H1 (cell line): ENCODE measurements at regions of chr3 and their contacts with region 1.

Region 1: DNA sequence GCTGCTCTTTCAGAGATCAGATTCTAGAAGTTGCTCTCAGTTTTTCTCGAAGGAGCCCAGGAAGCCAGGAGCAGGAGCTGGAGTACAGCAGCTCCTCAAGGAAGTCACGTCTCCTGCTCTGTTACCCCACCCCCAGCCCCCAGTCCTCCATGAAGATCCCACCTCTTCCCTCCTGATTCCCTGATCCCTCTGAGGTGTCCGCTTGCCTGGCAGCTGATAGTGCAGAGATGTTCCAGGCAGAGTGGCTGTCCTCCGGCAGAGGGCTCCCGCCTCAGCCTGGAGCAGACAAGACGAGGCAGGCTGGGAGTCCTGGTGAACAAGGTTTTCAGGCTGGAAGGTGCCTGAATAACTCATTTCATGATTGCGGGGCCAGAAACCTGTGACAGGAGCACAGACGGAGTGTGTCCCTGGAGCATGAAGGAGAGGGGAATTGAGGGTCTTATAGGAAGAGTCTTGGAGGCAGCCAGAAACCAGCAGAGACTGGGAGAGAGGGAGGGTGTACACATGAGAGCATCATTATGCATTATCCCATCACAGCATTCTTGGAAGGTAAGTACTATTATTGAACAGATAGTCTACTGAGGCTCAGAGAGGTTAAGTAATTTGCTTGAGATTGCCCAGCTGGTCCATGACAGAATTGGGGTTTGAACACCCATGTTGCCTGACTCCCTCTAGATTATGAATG is 1.2 kb downstream of the HRH1 start:
- DNase-seq: peak in 1 of 2 experiments; percentile 76
- H3K4me3 ChIP-seq: peak overlapping the region; percentile 24 to 68 (median 46); a peak in 7 of 8 replicates
- H3K27ac ChIP-seq: no peak overlapping the region
- H3K4me1 ChIP-seq: peaks cover 0 to 6% (median under 1%) of the 10 kb centered on the region in 4 experiments; a peak in 3 of 7 replicates
- H3K27me3 ChIP-seq: peaks cover 5 to 37% (median 30%) of the 10 kb centered on the region in 4 experiments
- CTCF ChIP-seq: peak; percentile 68 to 88 (median 87)
- EP300 ChIP-seq: no peak
- POLR2A ChIP-seq: no peak
- RAD21 ChIP-seq: peak; percentile 71 to 73

Region 2: GRCh38 chr3:11096266-11097135 is 59.0 kb before region 1 on chr3:
- CTCF ChIA-PET with region 1: interaction called, 11 read pairs
- POLR2A ChIA-PET with region 1: no interaction called
- DNase-seq: peak in 1 of 2 experiments; percentile 55
- H3K4me3 ChIP-seq: peak overlapping the region; percentile 7 to 48 (median 26); a peak in 5 of 8 replicates
- H3K27ac ChIP-seq: no peak overlapping the region
- H3K4me1 ChIP-seq: peaks cover 0 to 8% (median 4%) of the 10 kb centered on the region in 4 experiments; a peak in 6 of 7 replicates
- H3K27me3 ChIP-seq: peaks cover 0 to 3% (median 0%) of the 10 kb centered on the region in 4 experiments; a peak in 2 of 7 replicates
- CTCF ChIP-seq: no peak
- EP300 ChIP-seq: no peak
- POLR2A ChIP-seq: no peak
- RAD21 ChIP-seq: no peak

Region 3: GRCh38 chr3:11120091-11120805 is 35.2 kb before region 1 on chr3:
- CTCF ChIA-PET with region 1: interaction called, 13 read pairs
- POLR2A ChIA-PET with region 1: no interaction called
- DNase-seq: no peak
- H3K4me3 ChIP-seq: no peak overlapping the region
- H3K27ac ChIP-seq: no peak overlapping the region
- H3K4me1 ChIP-seq: peaks cover 0 to 5% (median 0%) of the 10 kb centered on the region in 4 experiments; a peak in 1 of 7 replicates
- H3K27me3 ChIP-seq: no peaks in the 10 kb centered on the region
- CTCF ChIP-seq: no peak
- EP300 ChIP-seq: no peak
- POLR2A ChIP-seq: no peak
- RAD21 ChIP-seq: no peak

Region 4: DNA sequence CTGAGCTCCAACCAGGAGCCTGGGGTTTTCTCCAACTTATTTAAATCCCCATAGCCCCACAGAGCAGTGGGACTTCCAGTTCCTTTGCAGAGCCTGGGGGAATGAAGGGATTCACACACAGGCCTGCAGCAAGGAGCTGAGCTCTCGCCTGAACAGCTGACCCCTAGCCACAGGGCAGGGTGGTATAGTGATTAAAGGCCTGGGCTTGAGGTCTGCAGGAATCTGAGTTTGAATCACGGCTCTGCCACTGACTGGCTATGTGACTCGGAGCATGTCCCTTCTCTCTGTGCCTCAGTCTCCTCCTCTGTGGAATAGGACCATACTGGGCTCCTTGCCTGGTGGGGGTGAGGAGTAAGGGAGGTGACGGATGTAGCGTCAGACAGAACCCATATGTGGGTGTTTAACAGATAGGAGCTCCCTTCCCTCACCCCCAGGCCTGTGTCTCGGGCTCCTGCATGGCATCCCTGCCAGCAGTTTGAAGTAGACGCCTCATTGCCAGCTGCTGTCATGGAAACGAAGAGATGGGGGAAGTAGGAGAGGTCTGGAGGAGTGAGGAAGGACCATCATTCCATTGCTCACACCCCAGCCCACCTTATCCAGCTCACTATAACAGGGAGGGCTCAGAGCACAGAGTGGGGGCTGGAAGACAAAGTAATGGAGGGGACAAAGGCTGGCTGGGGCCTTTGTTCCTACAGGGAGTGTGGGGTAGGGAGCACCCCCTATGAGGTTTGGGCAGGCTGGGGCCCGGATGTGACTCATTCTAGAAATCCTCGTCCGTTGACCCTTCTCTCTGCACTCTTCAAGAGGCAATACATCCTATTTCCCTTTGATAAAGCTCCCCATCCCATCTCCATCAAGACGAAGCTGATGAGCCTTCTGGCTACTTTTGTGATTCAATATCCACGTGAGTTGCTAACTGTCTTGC is 13.7 kb after region 1 on chr3:
- CTCF ChIA-PET with region 1: interaction called, 16 read pairs
- POLR2A ChIA-PET with region 1: no interaction called
- DNase-seq: no peak
- H3K4me3 ChIP-seq: no peak overlapping the region
- H3K27ac ChIP-seq: no peak overlapping the region
- H3K4me1 ChIP-seq: no peaks in the 10 kb centered on the region; a peak in 1 of 7 replicates
- H3K27me3 ChIP-seq: no peaks in the 10 kb centered on the region; a peak in 1 of 7 replicates
- CTCF ChIP-seq: no peak
- EP300 ChIP-seq: no peak
- POLR2A ChIP-seq: no peak
- RAD21 ChIP-seq: no peak

Region 5: GRCh38 chr3:11201246-11202024 is 46.0 kb after region 1 on chr3:
- CTCF ChIA-PET with region 1: interaction called, 32 read pairs
- POLR2A ChIA-PET with region 1: no interaction called
- DNase-seq: no peak
- H3K4me3 ChIP-seq: no peak overlapping the region
- H3K27ac ChIP-seq: no peak overlapping the region
- H3K4me1 ChIP-seq: peaks cover 0 to 2% (median 0%) of the 10 kb centered on the region in 4 experiments; a peak in 4 of 7 replicates
- H3K27me3 ChIP-seq: no peaks in the 10 kb centered on the region
- CTCF ChIP-seq: no peak
- EP300 ChIP-seq: no peak
- POLR2A ChIP-seq: no peak
- RAD21 ChIP-seq: no peak

Region 6: DNA sequence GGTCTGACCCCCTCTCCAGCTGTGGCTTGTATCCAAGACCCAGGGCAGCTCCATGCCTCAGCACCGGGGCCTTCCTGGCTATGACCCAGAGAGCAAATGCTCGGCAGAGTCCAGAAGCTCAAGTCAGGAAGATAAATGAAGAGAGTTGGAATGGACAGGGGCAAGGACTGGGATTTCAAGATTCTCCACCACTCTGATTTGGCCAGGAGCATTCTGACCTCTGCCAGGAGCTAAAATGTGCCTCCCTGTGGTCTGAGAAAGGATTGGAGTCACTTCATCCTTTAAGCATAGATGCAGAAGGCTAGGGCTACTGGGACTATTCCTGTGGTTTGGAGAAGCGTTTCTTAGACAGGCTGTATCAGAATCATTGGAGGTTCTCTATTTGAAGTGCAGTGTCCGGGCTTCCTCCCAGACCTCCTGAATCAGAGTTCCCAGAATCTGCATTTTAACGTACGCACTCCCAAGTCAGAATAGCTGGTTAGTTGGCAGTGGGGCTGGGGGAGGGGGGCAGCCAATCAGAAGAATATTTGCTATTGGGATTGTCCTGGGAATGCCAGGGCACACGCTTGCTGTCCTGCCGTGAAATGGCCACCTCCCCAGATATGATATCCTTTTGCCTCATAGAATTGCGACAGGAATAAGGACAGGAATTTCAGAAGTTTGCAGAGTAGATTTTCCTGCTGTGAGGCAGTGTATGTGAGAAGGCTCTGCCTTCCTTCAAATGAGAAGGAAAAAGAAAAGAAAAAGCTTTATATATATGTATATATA is 56.2 kb after region 1 on chr3:
- CTCF ChIA-PET with region 1: interaction called, 32 read pairs
- POLR2A ChIA-PET with region 1: no interaction called
- DNase-seq: no peak
- H3K4me3 ChIP-seq: no peak overlapping the region
- H3K27ac ChIP-seq: no peak overlapping the region
- H3K4me1 ChIP-seq: no peaks in the 10 kb centered on the region
- H3K27me3 ChIP-seq: no peaks in the 10 kb centered on the region
- CTCF ChIP-seq: peak in 2 of 3 experiments; percentile 22 to 28; a peak in 2 of 4 replicates
- EP300 ChIP-seq: no peak
- POLR2A ChIP-seq: no peak
- RAD21 ChIP-seq: peak; percentile 18 to 35

Region 7: GRCh38 chr3:11335056-11335608 is 179.6 kb after region 1 on chr3:
- CTCF ChIA-PET with region 1: interaction called, 16 read pairs
- POLR2A ChIA-PET with region 1: no interaction called
- DNase-seq: no peak
- H3K4me3 ChIP-seq: no peak overlapping the region
- H3K27ac ChIP-seq: no peak overlapping the region
- H3K4me1 ChIP-seq: no peaks in the 10 kb centered on the region
- H3K27me3 ChIP-seq: no peaks in the 10 kb centered on the region
- CTCF ChIP-seq: peak in 2 of 3 experiments; percentile 49 to 56; a peak in 2 of 4 replicates
- EP300 ChIP-seq: no peak
- POLR2A ChIP-seq: no peak
- RAD21 ChIP-seq: peak; percentile 75 to 77